ENCODE measurements at regions of chr14 and their contacts with region 1.

Region 1: DNA sequence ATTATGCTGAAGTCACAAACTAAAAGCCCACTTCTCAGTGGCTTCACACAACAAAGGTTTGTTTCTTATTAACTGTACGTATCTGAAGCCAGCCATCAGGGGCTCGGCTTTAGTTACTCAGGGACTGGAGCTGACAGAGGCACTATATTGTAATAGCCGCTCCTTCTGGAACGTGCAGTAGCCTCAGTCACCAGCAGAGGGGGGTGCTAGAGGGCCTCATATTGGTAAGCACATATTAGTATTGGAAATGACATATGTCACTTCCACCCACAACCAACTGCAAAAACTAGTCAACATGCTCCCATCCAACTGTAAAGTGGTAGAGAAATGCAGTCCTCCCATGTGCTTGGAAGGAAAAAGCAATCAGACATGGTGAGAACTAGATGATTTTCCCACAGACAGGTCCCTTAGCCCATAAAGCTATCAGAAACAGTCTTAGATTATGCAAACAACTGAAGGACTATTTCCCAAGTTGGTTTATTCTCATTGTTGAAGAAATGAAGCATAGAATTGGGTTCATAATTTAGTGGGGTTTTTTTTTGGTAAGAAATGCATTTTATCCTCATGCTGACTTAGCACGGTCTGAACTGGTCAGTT is 183.6 kb upstream of the G2E3 start:
- DNase-seq: peak; percentile 10
- H3K4me3 ChIP-seq: no peak overlapping the region
- H3K27ac ChIP-seq: no peak overlapping the region
- H3K27me3 ChIP-seq: no peaks in the 10 kb centered on the region
- CTCF ChIP-seq: peak; percentile 93

Region 2: DNA sequence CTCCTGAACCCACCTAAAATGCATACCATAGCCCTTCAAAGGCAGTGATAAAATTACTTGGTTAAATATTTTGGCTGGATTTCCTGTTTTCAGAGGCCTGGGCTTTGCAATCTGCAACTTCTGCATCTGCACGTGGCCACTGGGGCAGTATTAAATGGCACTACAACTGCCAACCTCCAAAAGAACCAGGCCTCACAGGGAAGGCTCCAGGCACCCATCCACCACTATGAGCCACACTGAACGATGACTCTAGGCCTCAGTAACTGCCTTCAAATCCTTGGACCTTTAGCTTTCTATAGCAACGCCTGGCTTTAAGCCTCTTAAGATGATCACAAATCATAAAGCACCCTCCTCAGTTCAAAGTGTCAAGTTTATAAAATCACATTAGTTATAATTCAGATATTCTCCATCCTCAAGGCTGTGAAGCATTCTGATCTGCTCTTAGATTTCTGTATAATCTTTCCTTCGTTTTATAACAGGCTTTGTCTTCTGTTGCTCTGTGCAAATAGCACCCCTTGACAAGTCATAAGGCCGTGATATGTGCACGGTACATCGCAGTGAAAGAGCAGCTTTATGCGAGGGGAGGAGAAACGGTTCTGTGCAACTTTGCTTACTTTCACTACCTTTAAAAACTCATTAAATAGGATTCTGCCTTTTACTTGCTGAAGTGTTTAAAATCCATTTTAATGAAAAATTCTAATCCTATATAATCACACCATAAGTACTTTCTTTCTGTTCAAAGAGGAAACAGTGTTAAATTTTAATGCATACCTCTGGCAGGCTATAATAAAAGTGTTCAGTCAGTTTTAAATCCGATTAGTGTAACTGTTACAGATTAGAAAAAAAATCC is 12.8 kb before region 1 on chr14:
- CTCF ChIA-PET with region 1: interaction called, 15 read pairs
- POLR2A ChIA-PET with region 1: no interaction called
- DNase-seq: no peak
- H3K4me3 ChIP-seq: no peak overlapping the region
- H3K27ac ChIP-seq: no peak overlapping the region
- H3K27me3 ChIP-seq: peaks cover 3% of the 10 kb centered on the region
- CTCF ChIP-seq: no peak

Region 3: GRCh38 chr14:30385925-30386324 is 10.5 kb after region 1 on chr14:
- CTCF ChIA-PET with region 1: interaction called, 13 read pairs
- POLR2A ChIA-PET with region 1: no interaction called
- DNase-seq: no peak
- H3K4me3 ChIP-seq: no peak overlapping the region
- H3K27ac ChIP-seq: no peak overlapping the region
- H3K27me3 ChIP-seq: no peaks in the 10 kb centered on the region
- CTCF ChIP-seq: no peak

Region 4: GRCh38 chr14:30402846-30403245 is 27.5 kb after region 1 on chr14:
- CTCF ChIA-PET with region 1: no interaction called
- POLR2A ChIA-PET with region 1: no interaction called
- DNase-seq: no peak
- H3K4me3 ChIP-seq: no peak overlapping the region
- H3K27ac ChIP-seq: no peak overlapping the region
- H3K27me3 ChIP-seq: no peaks in the 10 kb centered on the region
- CTCF ChIP-seq: no peak

Region 5: DNA sequence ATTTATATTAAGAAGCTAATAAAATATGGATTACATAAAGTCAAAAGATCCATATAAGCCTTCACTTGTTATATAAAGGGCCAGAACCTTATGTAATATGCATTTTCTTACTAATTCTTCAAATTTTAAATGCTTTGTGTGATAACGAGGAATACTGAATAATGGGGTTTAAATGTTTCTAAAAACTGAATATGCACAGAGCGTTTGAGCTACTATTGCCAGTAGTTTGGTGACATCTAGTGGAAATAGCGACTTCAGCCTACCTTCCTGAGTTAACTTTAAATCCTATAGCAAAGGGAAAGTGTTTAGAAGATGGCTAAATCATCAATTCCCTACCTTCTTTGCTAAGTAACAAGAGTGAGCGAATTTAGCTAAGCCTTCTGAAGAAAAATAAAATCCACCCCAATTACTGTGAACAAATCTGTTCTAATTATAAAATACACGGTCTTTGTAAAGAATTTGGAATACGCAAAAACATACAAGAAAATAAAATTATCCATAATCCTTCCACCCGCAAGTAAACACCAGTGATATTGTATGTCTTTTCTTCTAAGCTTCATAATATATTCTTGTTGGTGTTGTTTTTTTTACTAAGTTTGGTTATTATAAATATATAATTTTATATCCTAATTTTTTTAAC is 68.1 kb after region 1 on chr14:
- CTCF ChIA-PET with region 1: interaction called, 13 read pairs
- POLR2A ChIA-PET with region 1: no interaction called
- DNase-seq: no peak
- H3K4me3 ChIP-seq: no peak overlapping the region
- H3K27ac ChIP-seq: no peak overlapping the region
- H3K27me3 ChIP-seq: no peaks in the 10 kb centered on the region
- CTCF ChIP-seq: peak; percentile 54

Region 6: DNA sequence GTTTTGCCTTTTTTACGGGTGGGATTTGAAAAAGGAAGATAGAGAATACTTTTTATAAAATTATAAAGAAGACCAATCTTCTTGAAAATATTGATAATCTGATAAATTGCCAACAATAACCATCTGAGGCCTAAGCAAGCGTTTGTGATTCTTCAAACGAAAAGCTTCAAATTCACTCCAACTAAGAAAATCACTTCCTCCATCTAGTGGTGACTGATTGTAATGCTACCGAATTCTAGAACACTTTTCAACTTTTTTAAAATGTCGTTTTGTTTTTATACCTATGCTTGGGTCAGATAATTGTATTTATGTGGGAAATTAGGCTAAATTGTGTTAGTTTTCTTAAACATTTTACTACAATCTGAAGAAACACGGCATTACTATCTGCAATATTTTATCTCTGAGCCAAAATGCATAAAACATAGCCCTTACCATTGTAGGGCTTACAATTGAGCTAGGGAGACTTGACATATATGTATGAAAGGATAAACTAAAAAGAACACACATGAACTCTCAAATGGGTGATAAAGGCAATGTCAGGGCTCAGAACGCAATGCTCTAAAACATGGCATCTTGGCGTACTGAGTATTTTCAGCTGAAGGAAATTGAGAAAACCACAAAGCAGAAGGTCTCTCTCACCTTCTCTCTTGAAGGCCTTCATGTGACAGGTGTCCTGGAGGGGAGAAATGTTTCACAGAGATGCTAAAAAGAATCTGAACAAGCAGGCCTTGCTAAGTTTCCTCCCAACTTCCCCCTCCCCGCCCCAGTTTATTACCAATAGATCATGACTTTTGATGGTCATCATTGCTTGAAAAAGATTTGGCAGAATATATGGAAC is 146.7 kb after region 1 on chr14:
- CTCF ChIA-PET with region 1: interaction called, 13 read pairs
- POLR2A ChIA-PET with region 1: no interaction called
- DNase-seq: no peak
- H3K4me3 ChIP-seq: no peak overlapping the region
- H3K27ac ChIP-seq: no peak overlapping the region
- H3K27me3 ChIP-seq: no peaks in the 10 kb centered on the region
- CTCF ChIP-seq: peak; percentile 83

Region 7: DNA sequence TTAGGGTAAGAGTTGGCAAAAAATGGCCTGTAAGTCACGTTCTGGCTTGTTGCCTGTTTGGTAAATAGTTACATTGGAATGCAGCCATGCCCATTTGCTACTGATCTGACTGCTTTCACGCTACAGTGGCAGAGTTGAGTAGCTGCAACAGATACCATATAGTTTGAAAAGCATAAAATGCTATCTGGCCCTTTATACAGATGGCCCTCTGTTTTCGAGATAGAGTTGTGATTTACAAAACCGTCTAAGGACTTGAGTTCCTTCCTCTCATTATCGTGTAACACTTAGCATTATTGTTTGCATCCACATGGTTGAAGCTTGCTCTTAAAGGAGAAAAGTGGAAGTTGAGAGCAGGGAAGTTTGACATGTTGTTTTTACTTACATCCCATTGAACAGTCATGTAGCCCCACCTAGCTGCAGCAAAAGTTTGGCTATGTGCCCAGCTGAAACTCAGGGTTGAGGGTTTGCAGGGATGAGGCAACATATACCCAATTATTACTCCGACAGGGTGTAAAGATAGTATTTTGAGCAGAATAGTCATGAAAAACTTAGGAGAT is 235.5 kb after region 1 on chr14:
- CTCF ChIA-PET with region 1: interaction called, 13 read pairs
- POLR2A ChIA-PET with region 1: no interaction called
- DNase-seq: peak; percentile 47
- H3K4me3 ChIP-seq: no peak overlapping the region
- H3K27ac ChIP-seq: no peak overlapping the region
- H3K27me3 ChIP-seq: no peaks in the 10 kb centered on the region
- CTCF ChIP-seq: peak; percentile 46

Measured in AG04450 (cell line).